Activated T-helper 1 cell treated with anti-CD3 and anti-CD28 coated beads, Interleukin-12 subunit alpha, Interleukin-12 subunit beta, Interleukin-2, Interleukin-4 antibody, amounts not matched to agents 30 ng/mL and 10 ng/mL and 1 ng/mL, durations not matched to agents 14 hours and 24 hours and 36 hours (primary cell): ENCODE measurements at regions of chr12 and their contacts with region 1.

Region 1: GRCh38 chr12:53645165-53645564 is 19.0 kb upstream of the ATF7 start:
- DNase-seq: no peak
- H3K4me3 Mint-ChIP-seq: no peak overlapping the region
- H3K27ac Mint-ChIP-seq: no peak overlapping the region
- H3K4me1 Mint-ChIP-seq: no peaks in the 10 kb centered on the region
- H3K27me3 Mint-ChIP-seq: peaks cover 9% of the 10 kb centered on the region

Region 2: DNA sequence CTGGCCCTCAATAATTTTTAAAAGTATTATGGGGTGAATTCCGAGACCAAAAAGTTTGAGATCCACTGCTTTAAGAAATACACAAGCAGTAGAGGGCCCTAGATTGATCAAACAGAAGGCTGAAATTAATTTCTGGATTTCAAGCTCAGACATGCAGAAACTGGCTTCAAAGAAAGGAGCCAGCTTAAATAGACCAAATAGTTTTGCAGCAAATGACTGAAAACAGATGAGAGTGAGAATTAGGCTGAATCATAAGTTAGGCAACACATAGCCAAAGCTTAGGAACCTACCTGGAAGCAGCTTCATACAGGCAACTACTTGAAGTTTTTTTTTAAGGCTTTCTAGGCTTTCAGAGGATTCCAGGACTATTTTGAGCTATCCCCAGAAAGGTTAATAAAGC is 31.3 kb before region 1 on chr12:
- intact Hi-C with region 1: loop called (anchors 1 kb)
- DNase-seq: no peak
- H3K4me3 Mint-ChIP-seq: no peak overlapping the region
- H3K27ac Mint-ChIP-seq: no peak overlapping the region
- H3K4me1 Mint-ChIP-seq: peaks cover 21% of the 10 kb centered on the region
- H3K27me3 Mint-ChIP-seq: no peaks in the 10 kb centered on the region